ENCODE measurements at regions of chr2 and their contacts with region 1.

Region 1: DNA sequence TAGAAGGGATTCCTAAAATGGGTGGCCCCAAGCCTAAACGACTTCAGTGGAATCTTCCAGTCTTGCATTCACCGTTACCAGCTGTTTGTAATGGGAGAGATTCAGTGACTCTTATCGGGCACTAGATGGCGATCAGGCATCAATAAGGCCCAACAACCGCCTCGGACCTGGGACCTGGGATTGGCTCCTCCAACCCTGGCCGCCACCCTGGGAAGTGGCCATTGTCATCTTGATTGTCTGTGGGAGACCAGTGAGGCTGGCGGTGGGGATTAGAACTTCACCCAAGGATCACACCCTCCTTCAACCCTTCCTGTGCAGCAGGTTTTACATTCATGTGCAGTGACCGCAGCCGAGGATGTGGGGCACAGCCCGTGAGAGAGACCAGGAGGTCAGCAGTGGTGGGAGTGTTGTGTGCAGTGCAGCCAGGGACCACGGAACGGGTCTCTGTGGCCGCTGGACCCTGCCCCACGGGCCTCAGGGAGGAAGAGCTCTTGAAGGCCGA is 85.3 kb downstream of the SPP2 start:
- DNase-seq: peak; percentile 23 to 81 (median 52)

Region 2: DNA sequence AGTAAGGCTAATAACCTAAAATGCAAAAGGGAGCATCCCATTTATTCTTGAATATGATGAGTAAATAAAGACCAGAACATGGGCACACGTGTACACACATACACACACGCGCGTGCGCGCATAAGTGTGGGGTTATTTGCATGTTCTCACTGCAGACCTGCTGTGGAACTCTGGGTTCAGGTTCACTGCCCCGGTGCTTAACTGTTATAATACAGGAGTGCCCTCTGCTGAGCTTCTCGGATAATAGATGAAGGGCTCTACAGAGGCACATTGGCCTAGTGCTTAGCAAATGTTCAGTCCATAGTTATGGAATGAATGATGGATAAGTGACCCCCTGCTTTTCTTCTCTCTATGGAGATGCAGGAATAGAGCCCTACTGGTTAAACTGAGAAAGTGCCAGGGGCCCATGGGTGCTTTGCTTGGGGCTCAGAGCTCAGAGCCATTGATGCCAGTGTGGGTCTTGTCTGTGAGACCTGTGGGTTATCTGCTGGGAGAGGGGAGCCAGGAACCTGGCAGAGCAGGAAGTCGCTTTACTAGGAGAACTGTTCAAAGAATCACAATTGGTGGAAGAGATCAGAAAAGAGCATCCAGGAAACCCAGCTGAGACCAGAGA is 364.7 kb after region 1 on chr2:
- intact Hi-C with region 1: loop called (anchors 5 kb)
- DNase-seq: peak in 38 of 42 donors; percentile 21 to 81 (median 50)

Region 3: GRCh38 chr2:234544659-234545611 is 409.2 kb after region 1 on chr2:
- intact Hi-C with region 1: loop called (anchors 10 kb)
- DNase-seq: peak; percentile 28 to 91 (median 77)